GM10248 (cell line): ENCODE measurements at regions of chr15 and their contacts with region 1.

Region 1: GRCh38 chr15:85296615-85297402 is 83.6 kb upstream of the AKAP13 start:
- DNase-seq: peak; percentile 77
- CTCF ChIP-seq: peak; percentile 78

Region 2: DNA sequence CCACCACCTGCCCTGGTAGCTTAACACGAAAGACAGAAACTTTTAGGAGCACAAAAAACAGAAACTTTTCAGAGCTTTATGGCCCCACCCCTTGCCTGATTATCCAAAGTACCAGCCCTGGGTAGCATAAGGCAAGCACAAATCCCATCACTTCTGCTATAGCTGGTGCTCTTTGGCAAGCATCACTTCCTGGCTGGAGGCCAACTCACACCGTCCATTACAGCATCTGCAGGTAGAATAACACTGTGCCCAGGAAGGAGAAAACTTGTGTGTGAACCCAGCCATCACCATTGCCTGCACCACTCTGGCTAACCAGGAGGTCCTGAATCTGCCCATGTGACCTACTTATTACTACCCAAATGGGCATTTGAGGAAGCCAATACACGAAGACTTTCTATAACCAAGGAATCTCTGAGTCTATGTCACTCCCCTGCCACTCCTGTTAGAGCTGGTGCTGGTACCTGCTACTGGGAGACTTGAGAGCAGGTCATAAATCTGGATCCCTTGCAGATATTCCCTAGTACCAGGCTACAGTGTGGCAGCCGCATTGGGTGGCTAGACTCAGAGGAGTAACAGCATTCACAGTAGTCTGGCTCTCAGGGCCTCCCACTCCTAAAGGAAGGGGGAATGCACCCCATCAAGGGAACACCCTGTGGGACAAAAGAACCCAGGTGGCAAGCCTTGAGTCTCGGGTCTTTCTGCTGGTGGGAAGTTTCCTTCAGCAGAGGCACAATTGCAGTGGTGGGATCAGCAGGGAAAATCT is 10.3 kb after region 1 on chr15:
- CTCF ChIA-PET with region 1: interaction called, 28 read pairs
- POLR2A ChIA-PET with region 1: no interaction called
- DNase-seq: no peak
- CTCF ChIP-seq: no peak

Region 3: DNA sequence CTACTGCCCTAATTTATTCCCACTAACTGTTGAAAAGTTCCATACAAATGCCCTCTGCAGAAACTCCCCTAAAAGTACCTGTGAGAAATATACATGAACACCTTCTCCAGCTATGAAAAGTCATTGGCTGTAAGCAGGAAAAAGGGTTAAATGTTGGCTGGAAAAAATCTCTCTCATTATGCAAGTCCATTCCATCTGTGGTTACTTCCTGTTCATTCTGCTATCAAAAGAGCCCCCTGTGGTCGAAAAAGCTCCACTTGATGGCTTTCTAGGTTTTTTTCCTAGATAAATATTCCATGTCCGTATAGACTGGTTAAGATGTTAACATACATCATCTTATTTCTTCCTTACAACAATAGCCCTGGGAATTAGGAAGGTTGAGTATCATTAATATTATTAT is 27.4 kb after region 1 on chr15:
- CTCF ChIA-PET with region 1: interaction called, 22 read pairs
- POLR2A ChIA-PET with region 1: no interaction called
- DNase-seq: no peak
- CTCF ChIP-seq: no peak

Region 4: GRCh38 chr15:85402195-85402881 is 105.5 kb after region 1 on chr15:
- CTCF ChIA-PET with region 1: interaction called, 19 read pairs
- POLR2A ChIA-PET with region 1: no interaction called
- DNase-seq: no peak
- CTCF ChIP-seq: no peak

Region 5: GRCh38 chr15:85485956-85486567 is 189.3 kb after region 1 on chr15:
- CTCF ChIA-PET with region 1: interaction called, 10 read pairs
- POLR2A ChIA-PET with region 1: no interaction called
- DNase-seq: peak; percentile 73
- CTCF ChIP-seq: peak; percentile 57